ENCODE measurements at regions of chr7 and their contacts with region 1.

Region 1: GRCh38 chr7:21538938-21539495 is 3.8 kb upstream of the DNAH11 start:
- DNase-seq: no peak
- ATAC-seq: no peak
- H3K4me3 ChIP-seq: no peak overlapping the region
- H3K27ac ChIP-seq: no peak overlapping the region
- H3K4me1 ChIP-seq: peaks cover 4 to 16% (median 14%) of the 10 kb centered on the region in 9 donors
- H3K27me3 ChIP-seq: peaks cover 8 to 56% (median 40%) of the 10 kb centered on the region in 7 donors
- CTCF ChIP-seq: no peak

Region 2: GRCh38 chr7:21497072-21497471 is 41.9 kb before region 1 on chr7:
- intact Hi-C with region 1: no loop called
- DNase-seq: no peak
- ATAC-seq: no peak
- H3K4me3 ChIP-seq: no peak overlapping the region
- H3K27ac ChIP-seq: no peak overlapping the region
- H3K4me1 ChIP-seq: no peaks in the 10 kb centered on the region
- H3K27me3 ChIP-seq: no peaks in the 10 kb centered on the region
- CTCF ChIP-seq: peak in 2 of 9 donors; percentile 9 to 16

Region 3: DNA sequence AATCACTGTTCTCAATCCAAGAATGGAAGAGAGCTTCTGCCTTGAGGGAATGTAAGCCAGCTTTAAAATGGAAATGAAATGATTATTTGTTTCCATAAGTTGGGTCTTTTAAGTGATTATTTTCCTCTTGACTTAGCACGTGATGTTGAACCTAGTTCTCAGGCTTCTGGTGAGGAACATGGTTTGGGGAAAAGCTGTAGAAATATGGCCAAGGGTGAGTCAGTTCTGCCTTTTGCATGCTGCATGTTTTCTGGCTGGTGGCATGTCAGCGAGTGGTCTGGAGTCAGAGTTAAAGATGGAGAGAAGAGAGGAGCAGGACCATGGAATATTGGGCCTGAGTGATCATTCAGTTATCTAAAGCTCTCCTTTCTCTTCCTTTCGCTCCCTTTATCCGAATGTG is 57.8 kb after region 1 on chr7:
- intact Hi-C with region 1: loop called in 1 of 10 experiments (anchors 10 kb)
- DNase-seq: no peak
- ATAC-seq: no peak
- H3K4me3 ChIP-seq: no peak overlapping the region
- H3K27ac ChIP-seq: no peak overlapping the region
- H3K4me1 ChIP-seq: no peaks in the 10 kb centered on the region
- H3K27me3 ChIP-seq: no peaks in the 10 kb centered on the region
- CTCF ChIP-seq: no peak

Measured in heart right ventricle (tissue), 16 donors.